ENCODE measurements at regions of chr9 and their contacts with region 1.

Region 1: GRCh38 chr9:70484210-70485130 is 70.0 kb upstream of the KLF9 start:
- DNase-seq: peak; percentile 53
- H3K4me3 ChIP-seq: no peak overlapping the region
- H3K27ac ChIP-seq: peak overlapping the region; percentile 92 to 96
- H3K4me1 ChIP-seq: peaks cover 23% of the 10 kb centered on the region
- H3K27me3 ChIP-seq: no peaks in the 10 kb centered on the region
- CTCF ChIP-seq: peak; percentile 66 to 79 (median 68)
- POLR2A ChIP-seq: no peak

Region 2: GRCh38 chr9:70080481-70081119 is 403.9 kb before region 1 on chr9:
- intact Hi-C with region 1: loop called (anchors 10 kb)
- DNase-seq: no peak
- H3K4me3 ChIP-seq: no peak overlapping the region
- H3K27ac ChIP-seq: peak overlapping the region in 1 of 2 donors; percentile 3
- H3K4me1 ChIP-seq: no peaks in the 10 kb centered on the region
- H3K27me3 ChIP-seq: no peaks in the 10 kb centered on the region
- CTCF ChIP-seq: no peak
- POLR2A ChIP-seq: no peak

Region 3: GRCh38 chr9:70258692-70259511 is 225.6 kb before region 1 on chr9 and contains the start of gene SMC5:
- intact Hi-C with region 1: loop called (anchors 5 kb)
- DNase-seq: peak; percentile 90
- H3K4me3 ChIP-seq: peak within 1 kb of the TSS; percentile 76 to 89
- H3K27ac ChIP-seq: peak within 1 kb of the TSS; percentile 91 to 98
- H3K4me1 ChIP-seq: peaks cover 17% of the 10 kb centered on the region
- H3K27me3 ChIP-seq: no peaks in the 10 kb centered on the region
- CTCF ChIP-seq: no peak
- POLR2A ChIP-seq: peak; percentile 98
- total RNA-seq, gene SMC5: 28.7 to 29.7 TPM

Region 4: DNA sequence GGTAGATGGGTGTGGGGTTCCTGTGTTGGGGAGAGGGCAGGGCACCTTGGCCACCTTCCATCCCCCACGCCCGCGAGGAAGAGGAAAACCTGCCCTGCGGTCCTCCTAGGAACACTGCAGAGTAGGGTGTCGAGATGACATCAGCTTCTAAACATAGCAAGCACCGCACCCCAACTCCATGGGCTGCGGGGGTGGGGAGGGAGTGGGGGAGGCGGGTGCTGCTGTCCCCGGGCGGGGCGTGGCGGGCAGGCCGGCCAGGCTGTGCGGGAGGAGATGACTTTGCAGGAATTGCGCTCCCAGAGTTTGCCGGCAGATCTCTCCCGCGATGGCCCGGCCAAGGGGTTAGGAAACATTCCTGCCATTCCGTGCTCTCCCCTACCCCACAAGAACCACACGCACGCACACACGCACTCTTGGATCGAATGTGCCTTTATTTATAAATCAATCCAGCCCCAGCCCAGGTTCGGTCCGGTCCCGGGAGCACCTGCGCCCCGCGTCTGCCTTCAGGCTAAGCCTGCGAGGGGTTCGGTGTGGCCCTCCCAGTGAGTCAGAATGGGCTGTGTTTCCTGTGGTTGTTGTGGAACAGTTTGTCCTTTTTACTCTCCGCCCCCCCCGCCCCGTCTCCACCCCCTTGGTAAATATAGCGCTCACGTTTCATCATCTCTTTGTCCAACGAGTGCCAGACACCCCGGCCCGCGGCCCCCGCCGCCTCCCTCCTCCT is 64.8 kb before region 1 on chr9:
- intact Hi-C with region 1: loop called (anchors 2 kb)
- DNase-seq: peak; percentile 98
- H3K4me3 ChIP-seq: peak overlapping the region; percentile 30 to 48
- H3K27ac ChIP-seq: peak overlapping the region; percentile 100
- H3K4me1 ChIP-seq: peaks cover 19% of the 10 kb centered on the region
- H3K27me3 ChIP-seq: no peaks in the 10 kb centered on the region
- CTCF ChIP-seq: peak in 1 of 4 experiments; percentile 7
- POLR2A ChIP-seq: peak; percentile 31

Region 5: GRCh38 chr9:70587201-70587600 is 102.7 kb after region 1 on chr9:
- intact Hi-C with region 1: loop called (anchors 5 kb)
- DNase-seq: no peak
- H3K4me3 ChIP-seq: no peak overlapping the region
- H3K27ac ChIP-seq: peak overlapping the region; percentile 55 to 74
- H3K4me1 ChIP-seq: no peaks in the 10 kb centered on the region
- H3K27me3 ChIP-seq: no peaks in the 10 kb centered on the region
- CTCF ChIP-seq: no peak
- POLR2A ChIP-seq: no peak

Measured in prostate gland (tissue), 2 donors.